BJ (cell line): ENCODE measurements at regions of chr15 and their contacts with region 1.

Region 1: GRCh38 chr15:85340321-85340665 is 40.1 kb upstream of the AKAP13 start:
- DNase-seq: no peak
- H3K4me3 ChIP-seq: no peak overlapping the region
- H3K27me3 ChIP-seq: no peaks in the 10 kb centered on the region
- CTCF ChIP-seq: no peak

Region 2: DNA sequence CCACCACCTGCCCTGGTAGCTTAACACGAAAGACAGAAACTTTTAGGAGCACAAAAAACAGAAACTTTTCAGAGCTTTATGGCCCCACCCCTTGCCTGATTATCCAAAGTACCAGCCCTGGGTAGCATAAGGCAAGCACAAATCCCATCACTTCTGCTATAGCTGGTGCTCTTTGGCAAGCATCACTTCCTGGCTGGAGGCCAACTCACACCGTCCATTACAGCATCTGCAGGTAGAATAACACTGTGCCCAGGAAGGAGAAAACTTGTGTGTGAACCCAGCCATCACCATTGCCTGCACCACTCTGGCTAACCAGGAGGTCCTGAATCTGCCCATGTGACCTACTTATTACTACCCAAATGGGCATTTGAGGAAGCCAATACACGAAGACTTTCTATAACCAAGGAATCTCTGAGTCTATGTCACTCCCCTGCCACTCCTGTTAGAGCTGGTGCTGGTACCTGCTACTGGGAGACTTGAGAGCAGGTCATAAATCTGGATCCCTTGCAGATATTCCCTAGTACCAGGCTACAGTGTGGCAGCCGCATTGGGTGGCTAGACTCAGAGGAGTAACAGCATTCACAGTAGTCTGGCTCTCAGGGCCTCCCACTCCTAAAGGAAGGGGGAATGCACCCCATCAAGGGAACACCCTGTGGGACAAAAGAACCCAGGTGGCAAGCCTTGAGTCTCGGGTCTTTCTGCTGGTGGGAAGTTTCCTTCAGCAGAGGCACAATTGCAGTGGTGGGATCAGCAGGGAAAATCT is 33.2 kb before region 1 on chr15:
- CTCF ChIA-PET with region 1: no interaction called
- POLR2A ChIA-PET with region 1: no interaction called
- DNase-seq: no peak
- H3K4me3 ChIP-seq: no peak overlapping the region
- H3K27me3 ChIP-seq: no peaks in the 10 kb centered on the region
- CTCF ChIP-seq: no peak

Region 3: DNA sequence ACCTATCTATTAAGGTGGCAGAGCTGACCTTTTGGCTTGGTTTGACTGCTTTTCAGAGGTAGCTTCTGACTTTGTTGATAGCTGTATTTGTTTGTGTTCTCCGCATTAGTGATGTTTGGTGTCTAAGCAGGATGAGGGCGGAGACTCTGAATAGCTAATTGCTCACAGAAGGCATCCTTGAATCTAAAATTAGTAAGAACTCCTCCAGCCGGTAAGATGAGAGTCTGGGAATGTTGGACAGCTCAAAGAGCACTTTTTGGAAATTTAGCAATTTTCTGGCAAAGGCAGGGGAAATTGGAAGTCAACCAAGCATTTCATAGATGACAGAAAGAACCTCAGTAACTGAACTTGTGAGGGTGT is 280.4 kb after region 1 on chr15:
- CTCF ChIA-PET with region 1: no interaction called
- POLR2A ChIA-PET with region 1: interaction called, 19 read pairs
- DNase-seq: peak; percentile 83
- H3K4me3 ChIP-seq: peak overlapping the region; percentile 36
- H3K27me3 ChIP-seq: no peaks in the 10 kb centered on the region
- CTCF ChIP-seq: no peak